GM12878 (cell line): ENCODE measurements at regions of chr1 and their contacts with region 1.

Region 1: DNA sequence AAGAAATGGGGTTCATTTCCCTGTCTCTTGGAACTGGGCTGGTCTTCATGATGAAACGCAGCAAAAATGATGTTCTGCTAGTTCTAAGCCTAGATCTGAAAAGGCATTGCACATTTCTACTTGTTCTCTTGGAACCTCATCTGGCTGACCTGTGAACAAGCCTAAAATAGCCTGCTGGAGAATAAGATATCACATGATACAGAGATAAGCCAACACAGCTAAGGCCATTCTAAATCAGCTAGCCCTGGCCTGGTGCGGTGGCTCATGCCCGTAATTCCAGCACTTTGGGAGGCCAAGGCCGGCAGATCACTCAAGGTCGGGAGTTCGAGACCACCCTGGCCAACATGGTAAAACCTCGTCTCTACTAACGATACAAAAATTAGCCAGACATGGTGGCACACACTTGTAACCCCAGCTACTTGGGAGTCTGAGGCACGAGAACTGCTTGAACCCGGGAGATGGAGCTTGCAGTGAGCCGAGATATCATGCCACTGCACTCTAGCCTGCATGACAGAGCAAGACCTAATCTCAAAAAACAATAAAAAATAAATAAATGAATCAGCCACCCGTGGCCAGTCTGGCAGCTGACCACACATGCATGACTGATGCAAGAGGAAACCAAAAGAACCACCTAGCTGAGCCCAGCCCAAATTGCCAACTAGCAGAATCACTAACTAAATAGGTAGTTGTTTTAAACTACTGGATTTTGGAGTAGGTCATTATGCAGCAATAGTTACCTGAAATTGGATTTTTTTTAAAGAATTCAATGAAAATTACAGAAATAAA is 18.0 kb downstream of the CD244 start:
- DNase-seq: no peak
- ATAC-seq: no peak; the same call in 2 of the 3 replicates
- H3K4me3 ChIP-seq: no peak overlapping the region
- H3K27ac ChIP-seq: no peak overlapping the region
- H3K4me1 ChIP-seq: no peaks in the 10 kb centered on the region
- H3K27me3 ChIP-seq: no peaks in the 10 kb centered on the region
- CTCF ChIP-seq: no peak
- EP300 ChIP-seq: no peak
- POLR2A ChIP-seq: no peak
- RAD21 ChIP-seq: no peak

Region 2: DNA sequence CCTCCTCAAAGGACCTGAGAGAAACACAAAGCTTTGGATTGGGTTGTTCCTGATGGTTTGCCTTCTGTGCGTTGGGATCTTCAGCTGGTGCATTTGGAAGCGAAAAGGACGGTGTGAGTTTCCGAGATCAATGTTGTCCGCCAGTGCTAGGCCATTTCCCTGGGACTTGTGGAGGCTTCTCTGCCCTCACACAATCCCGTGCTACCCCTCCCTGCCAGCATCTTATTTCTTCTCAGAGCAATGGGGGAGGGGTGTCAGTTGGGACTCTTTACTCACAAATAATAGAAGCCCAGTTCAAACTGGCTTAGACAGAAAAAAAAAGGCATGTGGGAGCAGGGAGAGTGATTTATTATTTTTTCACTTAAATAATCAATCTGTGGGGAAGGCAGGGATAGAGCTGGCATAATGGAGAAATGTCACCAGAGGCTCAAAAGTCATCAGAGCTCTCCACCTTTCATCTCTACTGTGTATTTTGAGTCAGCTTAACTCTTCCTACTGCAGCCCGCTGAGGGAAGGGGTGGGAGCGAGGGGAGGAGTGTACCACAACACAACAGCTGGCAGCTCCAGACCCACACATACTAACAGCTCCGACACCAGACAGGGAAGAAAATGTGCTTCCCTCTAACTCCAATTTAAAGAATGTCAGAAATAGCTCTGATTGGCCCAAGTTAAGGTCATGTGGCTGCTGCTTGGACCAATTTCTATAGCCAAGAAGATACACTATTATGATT is 26.3 kb before region 1 on chr1:
- CTCF ChIA-PET with region 1: no interaction called
- POLR2A ChIA-PET with region 1: no interaction called
- RAD21 ChIA-PET with region 1: no interaction called
- SMC1A ChIA-PET with region 1: no interaction called
- in situ Hi-C with region 1: no loop called
- intact Hi-C with region 1: no loop called
- DNase-seq: no peak
- ATAC-seq: no peak
- H3K4me3 ChIP-seq: no peak overlapping the region
- H3K27ac ChIP-seq: no peak overlapping the region
- H3K4me1 ChIP-seq: no peaks in the 10 kb centered on the region
- H3K27me3 ChIP-seq: no peaks in the 10 kb centered on the region
- CTCF ChIP-seq: no peak
- EP300 ChIP-seq: no peak
- POLR2A ChIP-seq: no peak
- RAD21 ChIP-seq: no peak

Region 3: GRCh38 chr1:160855181-160855981 is 10.7 kb after region 1 on chr1:
- CTCF ChIA-PET with region 1: interaction called, 28 read pairs
- POLR2A ChIA-PET with region 1: interaction called, 25 read pairs
- RAD21 ChIA-PET with region 1: interaction called, 50 read pairs
- SMC1A ChIA-PET with region 1: interaction called, 229 read pairs
- in situ Hi-C with region 1: no loop called
- intact Hi-C with region 1: no loop called
- DNase-seq: peak; percentile 51
- ATAC-seq: peak; percentile 85
- H3K4me3 ChIP-seq: no peak overlapping the region
- H3K27ac ChIP-seq: no peak overlapping the region
- H3K4me1 ChIP-seq: peaks cover 14% of the 10 kb centered on the region
- H3K27me3 ChIP-seq: no peaks in the 10 kb centered on the region
- CTCF ChIP-seq: no peak
- EP300 ChIP-seq: no peak
- POLR2A ChIP-seq: no peak
- RAD21 ChIP-seq: no peak

Region 4: GRCh38 chr1:160862203-160863060 is 17.8 kb after region 1 on chr1 and contains the start of gene CD244:
- CTCF ChIA-PET with region 1: interaction called, 28 read pairs
- POLR2A ChIA-PET with region 1: interaction called, 25 read pairs
- RAD21 ChIA-PET with region 1: interaction called, 50 read pairs
- SMC1A ChIA-PET with region 1: interaction called, 229 read pairs
- in situ Hi-C with region 1: no loop called
- intact Hi-C with region 1: no loop called
- DNase-seq: peak; percentile 71
- ATAC-seq: peak; percentile 96
- H3K4me3 ChIP-seq: peak within 1 kb of the TSS; percentile 32; the same call in 1 of the 2 replicates
- H3K27ac ChIP-seq: no peak within 1 kb of the TSS
- H3K4me1 ChIP-seq: peaks cover 15% of the 10 kb centered on the region
- H3K27me3 ChIP-seq: no peaks in the 10 kb centered on the region
- CTCF ChIP-seq: no peak
- EP300 ChIP-seq: peak in 1 of 2 experiments; percentile 60; a peak in 1 of 4 replicates
- POLR2A ChIP-seq: peak; percentile 56
- RAD21 ChIP-seq: no peak
- polyA plus RNA-seq, gene CD244: 0.24 to 0.37 TPM

Region 5: DNA sequence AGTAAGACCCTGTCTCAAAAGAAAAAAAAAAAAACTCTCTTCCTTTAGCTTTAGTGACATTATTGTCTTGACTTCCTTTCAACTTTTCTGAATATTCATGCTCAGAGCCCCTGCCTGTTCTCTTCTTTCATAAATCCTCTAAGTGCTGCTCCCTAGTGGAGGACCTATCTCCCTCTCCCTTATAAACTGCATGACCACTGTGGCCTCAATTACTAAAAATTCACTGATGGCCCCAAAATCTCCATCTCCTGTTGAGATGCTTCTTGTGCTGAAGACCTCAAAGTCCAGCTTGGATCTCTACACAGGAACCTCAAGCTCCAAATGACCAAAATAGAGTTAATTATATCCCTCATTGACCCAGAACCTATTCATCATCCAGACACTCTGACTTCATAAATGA is 32.6 kb after region 1 on chr1:
- CTCF ChIA-PET with region 1: interaction called, 13 read pairs
- POLR2A ChIA-PET with region 1: no interaction called
- RAD21 ChIA-PET with region 1: interaction called, 6 read pairs
- SMC1A ChIA-PET with region 1: interaction called, 19 read pairs
- in situ Hi-C with region 1: no loop called
- intact Hi-C with region 1: no loop called
- DNase-seq: no peak
- ATAC-seq: peak; percentile 75
- H3K4me3 ChIP-seq: no peak overlapping the region
- H3K27ac ChIP-seq: no peak overlapping the region
- H3K4me1 ChIP-seq: no peaks in the 10 kb centered on the region
- H3K27me3 ChIP-seq: no peaks in the 10 kb centered on the region
- CTCF ChIP-seq: peak; percentile 32 to 37 (median 37); a peak in 5 of 6 replicates
- EP300 ChIP-seq: no peak
- POLR2A ChIP-seq: no peak
- RAD21 ChIP-seq: peak; percentile 47